PC-9 (cell line): ENCODE measurements at regions of chr1 and their contacts with region 1.

Region 1: DNA sequence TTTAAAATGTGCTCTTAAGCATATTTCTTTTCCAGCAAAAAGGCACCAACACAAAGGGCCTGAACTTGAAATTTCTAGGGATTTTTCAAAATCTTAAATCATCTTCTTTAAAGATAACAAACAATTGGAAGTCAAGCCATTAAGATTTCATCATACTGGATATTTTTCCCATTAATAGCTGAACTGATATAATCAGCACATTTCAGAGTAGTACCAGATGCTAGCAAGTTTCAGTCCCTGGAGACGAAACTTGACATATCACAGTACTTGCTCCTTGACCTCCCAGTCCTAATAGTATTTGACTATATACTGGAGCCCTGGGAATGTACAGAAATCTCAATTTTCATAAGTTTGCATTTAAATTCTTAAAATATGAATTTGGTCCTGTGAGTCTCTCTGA is 10.2 kb upstream of the CDC7 start:
- DNase-seq: no peak
- H3K4me3 ChIP-seq: no peak overlapping the region
- H3K27ac ChIP-seq: no peak overlapping the region
- H3K4me1 ChIP-seq: no peaks in the 10 kb centered on the region
- H3K27me3 ChIP-seq: no peaks in the 10 kb centered on the region
- CTCF ChIP-seq: no peak

Region 2: DNA sequence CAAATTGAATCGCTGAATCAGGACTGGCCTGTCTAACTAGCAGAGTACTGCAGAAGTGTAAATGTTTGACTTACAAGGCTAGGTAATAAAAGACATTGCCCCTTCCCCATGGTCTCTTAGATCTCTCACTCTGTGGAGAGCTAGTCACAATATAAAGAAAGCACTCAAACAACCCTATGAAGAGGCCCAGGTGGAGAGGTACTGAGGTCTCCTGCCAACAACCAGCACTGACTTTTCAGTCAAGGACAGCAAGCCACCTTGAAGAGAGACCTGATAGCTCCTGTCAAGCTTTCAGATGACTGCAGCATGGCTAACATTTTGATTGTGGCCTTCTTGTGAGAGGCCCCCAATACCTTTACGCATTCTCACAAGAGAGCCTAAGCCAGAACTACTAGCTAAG is 104.4 kb before region 1 on chr1:
- CTCF ChIA-PET with region 1: no interaction called
- POLR2A ChIA-PET with region 1: no interaction called
- intact Hi-C with region 1: no loop called
- DNase-seq: no peak
- H3K4me3 ChIP-seq: no peak overlapping the region
- H3K27ac ChIP-seq: no peak overlapping the region
- H3K4me1 ChIP-seq: no peaks in the 10 kb centered on the region
- H3K27me3 ChIP-seq: no peaks in the 10 kb centered on the region
- CTCF ChIP-seq: no peak

Region 3: DNA sequence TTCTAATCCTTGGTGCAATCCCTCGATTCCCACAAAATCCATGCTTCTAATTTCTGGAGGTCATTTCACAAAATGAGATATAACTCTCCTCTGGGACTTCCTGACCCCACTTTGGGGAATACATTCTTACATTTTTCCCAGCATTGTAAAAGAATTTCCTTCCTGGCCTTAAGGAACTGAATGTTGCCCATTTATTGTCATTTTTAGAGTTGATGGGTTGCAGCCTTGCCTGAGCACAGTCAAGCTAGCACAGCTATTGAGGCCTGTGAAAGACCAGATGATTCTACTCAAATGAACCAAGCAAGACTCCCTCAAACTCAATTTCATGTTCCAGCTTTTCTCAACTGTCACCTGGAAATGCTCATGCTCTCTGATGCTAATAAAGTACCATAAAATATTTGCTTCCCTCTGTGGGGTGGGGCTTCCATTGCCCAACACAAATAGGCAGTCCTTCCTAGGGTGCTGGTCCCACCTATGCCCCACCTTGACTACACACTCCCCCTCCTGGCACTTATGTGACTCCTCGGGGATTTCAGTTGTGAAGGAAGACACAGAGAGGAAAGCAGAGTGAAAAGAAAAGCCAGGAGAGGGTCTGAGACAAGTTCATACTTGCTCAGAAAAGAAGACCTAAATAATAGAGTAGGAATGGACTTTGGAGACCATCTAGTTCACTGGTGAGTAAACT is 13.8 kb before region 1 on chr1:
- CTCF ChIA-PET with region 1: interaction called, 19 read pairs
- POLR2A ChIA-PET with region 1: no interaction called
- intact Hi-C with region 1: no loop called
- DNase-seq: no peak
- H3K4me3 ChIP-seq: no peak overlapping the region
- H3K27ac ChIP-seq: no peak overlapping the region
- H3K4me1 ChIP-seq: 0 out of 2 replicates have a peak, but pooled peaks cover 5% of the 10 kb centered on the region
- H3K27me3 ChIP-seq: no peaks in the 10 kb centered on the region
- CTCF ChIP-seq: no peak

Region 4: GRCh38 chr1:91569411-91570119 is 79.1 kb after region 1 on chr1:
- CTCF ChIA-PET with region 1: no interaction called
- POLR2A ChIA-PET with region 1: no interaction called
- intact Hi-C with region 1: no loop called
- DNase-seq: peak; percentile 73 to 89
- H3K4me3 ChIP-seq: no peak overlapping the region
- H3K27ac ChIP-seq: peak overlapping the region; percentile 57
- H3K4me1 ChIP-seq: peaks cover 17% of the 10 kb centered on the region
- H3K27me3 ChIP-seq: no peaks in the 10 kb centered on the region
- CTCF ChIP-seq: no peak